Posterior vena cava (tissue), 2 donors: ENCODE measurements at regions of chr1 and their contacts with region 1.

Region 1: GRCh38 chr1:181023265-181024057 is 791 bp upstream of the STX6 start:
- DNase-seq: no peak

Region 2: DNA sequence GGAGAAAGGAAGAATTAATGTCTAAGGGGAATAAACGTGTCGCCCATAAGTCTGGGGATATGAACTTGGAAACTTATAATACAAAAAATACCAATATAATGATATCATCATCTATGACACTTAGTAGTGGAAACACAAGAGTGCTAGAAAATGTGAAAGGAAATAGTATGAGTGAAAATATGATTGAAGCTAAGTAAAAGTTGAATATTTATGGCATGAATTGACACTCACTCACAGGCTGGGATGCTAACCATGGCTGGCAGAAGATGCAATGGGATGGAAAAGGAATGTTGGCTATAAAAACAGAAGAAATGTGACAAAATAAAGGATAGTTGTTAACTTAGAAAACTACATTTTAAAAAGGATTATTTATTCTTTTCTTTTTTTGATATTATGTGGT is 271.5 kb before region 1 on chr1:
- intact Hi-C with region 1: no loop called
- DNase-seq: no peak

Region 3: GRCh38 chr1:181033799-181034451 is 10.5 kb after region 1 on chr1 and contains the start of gene MR1:
- intact Hi-C with region 1: no loop called
- DNase-seq: no peak
- total RNA-seq, gene MR1: 13.9 to 21.9 TPM

Region 4: DNA sequence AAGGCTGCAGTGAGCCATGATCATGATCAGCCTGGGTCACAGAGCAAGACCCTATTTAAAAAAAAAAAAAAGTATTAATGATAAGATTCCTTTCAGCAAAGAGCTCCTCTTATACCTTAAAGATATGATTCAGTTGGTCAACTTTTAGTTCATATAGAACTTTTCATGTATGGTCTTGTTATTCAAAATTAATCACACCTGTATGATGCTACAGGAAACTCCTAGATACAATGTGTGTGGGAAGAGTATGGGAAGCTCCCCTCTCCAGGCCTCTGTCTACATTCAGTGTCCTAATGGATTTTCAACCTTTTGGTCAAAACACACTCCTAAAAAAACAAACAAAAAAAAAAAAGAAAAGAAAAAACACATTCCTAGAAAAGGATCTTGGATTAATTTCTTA is 27.5 kb after region 1 on chr1:
- intact Hi-C with region 1: loop called in 1 of 2 experiments (anchors 1 kb)
- DNase-seq: no peak

Region 5: GRCh38 chr1:181112071-181112929 is 88.8 kb after region 1 on chr1:
- intact Hi-C with region 1: no loop called
- DNase-seq: peak; percentile 92